Dendritic cell treated with granulocyte-macrophage colony-stimulating factor and Interleukin-4, amounts not matched to agents 40 ng/mL and 50 ng/mL, for 4 days (primary cell): ENCODE measurements at regions of chr6 and their contacts with region 1.

Region 1: DNA sequence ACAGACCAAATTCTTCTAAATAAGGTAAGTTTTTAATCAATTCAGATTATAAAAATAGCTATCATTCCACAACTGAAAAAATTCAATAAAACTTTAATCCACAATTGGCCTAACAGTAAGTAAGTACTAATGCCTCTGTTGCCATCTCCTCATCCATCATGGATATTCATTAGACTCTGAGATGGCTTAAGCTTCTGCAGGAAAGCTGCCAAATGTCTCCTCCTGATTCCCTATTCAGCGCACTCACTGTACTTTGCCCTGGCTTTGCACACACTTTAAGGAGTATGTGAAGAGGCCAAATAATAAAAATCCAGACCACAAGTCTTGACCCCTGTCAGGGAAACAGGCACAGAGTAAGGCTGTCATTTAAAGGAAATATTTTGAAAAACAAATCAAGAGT is 23.6 kb downstream of the PGM3 start:
- H3K4me3 Mint-ChIP-seq: no peak overlapping the region
- H3K27ac Mint-ChIP-seq: no peak overlapping the region
- H3K4me1 Mint-ChIP-seq: no peaks in the 10 kb centered on the region
- H3K27me3 Mint-ChIP-seq: no peaks in the 10 kb centered on the region

Region 2: DNA sequence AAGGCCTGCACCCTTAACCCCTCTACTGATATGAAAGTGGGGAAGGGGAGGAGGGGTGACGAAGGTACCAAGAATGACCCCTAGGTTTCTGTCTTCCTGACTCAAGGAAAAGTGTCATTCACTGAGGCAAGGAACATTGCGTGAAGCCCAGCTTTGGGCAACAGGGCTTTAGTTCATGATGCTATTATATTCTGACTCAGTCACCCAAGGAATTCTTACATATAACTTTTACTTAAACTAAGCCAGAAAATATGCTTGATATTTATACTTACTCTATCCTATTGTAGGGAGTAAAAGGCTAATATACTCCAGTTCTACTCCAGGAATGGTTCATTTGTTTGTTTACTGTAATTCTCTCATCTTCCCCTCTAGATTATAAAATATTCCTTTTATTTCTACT is 41.5 kb before region 1 on chr6:
- intact Hi-C with region 1: loop called (anchors 5 kb)
- H3K4me3 Mint-ChIP-seq: no peak overlapping the region
- H3K27ac Mint-ChIP-seq: no peak overlapping the region
- H3K4me1 Mint-ChIP-seq: no peaks in the 10 kb centered on the region
- H3K27me3 Mint-ChIP-seq: no peaks in the 10 kb centered on the region